Posterior vena cava (tissue), 2 donors: ENCODE measurements at regions of chr2 and their contacts with region 1.

Region 1: DNA sequence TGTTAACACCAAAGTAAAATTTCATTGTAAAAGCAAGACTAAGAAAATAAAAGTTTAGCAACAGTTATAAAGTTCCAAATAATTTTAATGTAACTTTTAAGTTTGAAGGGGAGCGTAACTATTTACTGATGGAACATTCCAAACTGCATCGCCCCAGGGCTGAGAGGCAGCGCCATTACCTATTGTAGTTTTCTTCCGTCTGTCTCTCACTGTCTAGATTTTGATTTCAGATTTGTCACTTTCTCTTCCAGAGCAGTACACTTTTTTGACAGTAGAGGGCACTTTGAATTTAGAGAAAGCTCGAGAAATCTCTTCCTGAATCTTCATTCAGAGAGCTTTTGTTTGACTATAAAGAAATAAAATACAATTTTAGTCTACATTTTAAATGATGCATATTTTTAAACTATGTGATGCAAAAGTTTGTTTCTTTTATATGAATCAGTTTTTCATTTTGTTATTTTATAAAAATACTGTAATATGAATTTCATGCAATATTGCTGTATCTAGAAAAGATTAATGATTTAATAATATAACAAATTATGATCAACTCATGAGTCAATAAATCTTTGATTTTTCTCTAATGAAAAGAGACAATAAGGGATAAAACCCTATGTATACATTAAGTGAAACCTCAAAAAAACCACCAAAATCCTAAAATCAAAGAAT is 389.8 kb downstream of the FIGN start:
- DNase-seq: no peak

Region 2: DNA sequence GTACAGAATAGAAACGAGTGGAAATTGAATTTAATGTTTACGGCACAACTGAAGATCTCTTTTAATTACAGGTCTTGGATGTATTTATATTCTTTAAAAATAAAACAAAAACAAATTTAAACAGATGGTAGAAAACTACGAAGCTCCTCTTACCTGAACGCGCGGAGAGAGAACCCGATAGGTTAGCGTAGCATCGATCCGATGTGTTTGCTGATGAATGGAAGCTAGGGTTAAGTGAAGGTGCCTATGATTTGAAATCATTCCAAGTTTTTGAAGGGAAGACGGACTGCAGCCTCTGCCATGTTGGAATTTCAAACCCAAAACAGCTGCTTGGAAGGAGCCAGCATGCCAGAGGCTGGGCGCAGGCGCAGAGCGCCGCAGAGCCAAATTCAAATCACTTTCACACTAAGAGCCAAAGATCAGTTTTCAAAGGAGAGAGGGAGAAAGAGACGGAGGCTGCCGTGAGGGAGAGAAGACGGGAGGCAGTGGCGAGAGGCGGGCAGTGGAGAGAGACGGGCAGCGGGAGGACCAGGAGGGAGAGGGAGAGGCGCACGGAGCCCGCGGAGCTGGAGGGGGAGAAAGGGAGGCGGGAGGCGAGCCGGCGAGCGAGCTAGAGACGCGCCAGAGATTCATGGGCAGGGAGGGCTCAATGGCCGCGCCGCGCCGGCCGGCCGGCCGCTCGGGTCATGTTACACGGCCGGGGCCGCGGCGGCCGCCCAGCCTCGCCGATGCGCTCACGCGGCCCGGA is 389.8 kb after region 1 on chr2 and contains the start of gene FIGN:
- intact Hi-C with region 1: loop called in 1 of 2 experiments (anchors 5 kb)
- DNase-seq: peak; percentile 93
- total RNA-seq, gene FIGN: 14.4 to 23.6 TPM

Region 3: DNA sequence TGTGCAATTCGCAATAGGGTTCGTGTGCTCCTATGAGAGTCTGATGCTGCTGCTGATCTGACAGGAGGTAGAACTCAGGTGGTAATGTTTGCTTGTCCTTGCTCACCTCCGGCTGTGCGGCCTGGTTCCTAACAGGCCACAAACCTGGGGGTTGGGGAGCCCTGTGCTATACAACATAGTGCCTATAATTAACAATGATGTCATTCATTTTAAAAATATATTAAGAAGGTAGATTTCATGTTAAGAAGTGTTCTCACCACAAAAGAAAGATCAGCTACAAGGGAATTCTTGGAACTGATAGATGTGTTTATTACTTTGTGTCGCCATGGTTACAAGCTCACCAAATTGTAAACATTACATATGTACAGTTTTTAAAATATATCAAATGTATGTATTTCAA is 1074.7 kb after region 1 on chr2:
- intact Hi-C with region 1: loop called in 1 of 2 experiments (anchors 10 kb)
- DNase-seq: no peak

Region 4: GRCh38 chr2:164456619-164457018 is 1110.6 kb after region 1 on chr2:
- intact Hi-C with region 1: no loop called
- DNase-seq: no peak

Region 5: GRCh38 chr2:164841719-164842623 is 1495.9 kb after region 1 on chr2 and contains the start of gene COBLL1:
- intact Hi-C with region 1: loop called in 1 of 2 experiments (anchors 10 kb)
- DNase-seq: peak; percentile 93
- total RNA-seq, gene COBLL1: 76.9 to 92.6 TPM